CD14-positive monocyte (primary cell): ENCODE measurements at regions of chr1 and their contacts with region 1.

Region 1: GRCh38 chr1:3453203-3453761 is 1.2 kb upstream of the ARHGEF16 start:
- DNase-seq: peak; percentile 25 to 61 (median 36)
- H3K4me3 ChIP-seq: no peak overlapping the region
- H3K4me3 Mint-ChIP-seq: peak overlapping the region in 1 of 2 donors; percentile 69
- H3K27ac ChIP-seq: no peak overlapping the region
- H3K27ac Mint-ChIP-seq: no peak overlapping the region
- H3K4me1 ChIP-seq: peaks cover 7 to 13% of the 10 kb centered on the region in 2 donors
- H3K4me1 Mint-ChIP-seq: peaks cover 6% of the 10 kb centered on the region
- H3K27me3 ChIP-seq: peaks cover 5 to 22% of the 10 kb centered on the region in 2 donors
- H3K27me3 Mint-ChIP-seq: peaks cover 12 to 47% (median 32%) of the 10 kb centered on the region in 3 donors
- CTCF ChIP-seq: peak; percentile 94

Region 2: GRCh38 chr1:3275471-3276340 is 177.6 kb before region 1 on chr1:
- intact Hi-C with region 1: no loop called
- DNase-seq: no peak
- H3K4me3 ChIP-seq: no peak overlapping the region
- H3K4me3 Mint-ChIP-seq: no peak overlapping the region
- H3K27ac ChIP-seq: no peak overlapping the region
- H3K27ac Mint-ChIP-seq: no peak overlapping the region
- H3K4me1 ChIP-seq: no peaks in the 10 kb centered on the region
- H3K4me1 Mint-ChIP-seq: no peaks in the 10 kb centered on the region
- H3K27me3 ChIP-seq: no peaks in the 10 kb centered on the region
- H3K27me3 Mint-ChIP-seq: peaks cover 0 to 4% (median 0%) of the 10 kb centered on the region in 3 donors
- CTCF ChIP-seq: no peak

Region 3: GRCh38 chr1:3483801-3484444 is 30.6 kb after region 1 on chr1:
- intact Hi-C with region 1: loop called in 1 of 2 experiments (anchors 1 kb)
- DNase-seq: peak in 2 of 3 donors; percentile 7 to 27
- H3K4me3 ChIP-seq: no peak overlapping the region
- H3K4me3 Mint-ChIP-seq: no peak overlapping the region
- H3K27ac ChIP-seq: no peak overlapping the region
- H3K27ac Mint-ChIP-seq: no peak overlapping the region
- H3K4me1 ChIP-seq: no peaks in the 10 kb centered on the region
- H3K4me1 Mint-ChIP-seq: no peaks in the 10 kb centered on the region
- H3K27me3 ChIP-seq: no peaks in the 10 kb centered on the region
- H3K27me3 Mint-ChIP-seq: peaks cover 2 to 4% (median 3%) of the 10 kb centered on the region in 3 donors
- CTCF ChIP-seq: peak; percentile 87